ENCODE measurements at regions of chr7 and their contacts with region 1.

Region 1: DNA sequence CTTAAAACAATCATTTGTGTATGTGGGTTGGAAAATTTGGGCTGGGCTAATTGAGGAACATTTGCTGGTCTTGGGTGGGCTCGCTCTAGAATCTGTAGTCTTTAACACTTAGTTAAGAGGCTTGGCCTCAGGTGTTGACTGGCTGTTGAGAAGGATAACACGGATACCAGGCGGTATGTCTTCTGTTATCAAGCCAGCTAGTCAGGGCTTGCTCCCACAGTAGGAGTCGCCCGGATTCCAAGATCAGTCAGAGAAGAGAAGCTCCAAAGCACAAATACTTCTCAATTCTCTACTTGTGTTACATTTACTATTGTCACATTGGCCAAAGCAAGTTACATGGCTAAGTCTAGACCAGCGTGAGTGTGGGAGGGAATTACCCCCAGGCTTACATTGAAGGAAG is 62.7 kb upstream of the SP8 start:
- DNase-seq: no peak
- H3K4me3 ChIP-seq: no peak overlapping the region
- H3K27ac ChIP-seq: no peak overlapping the region
- H3K27me3 ChIP-seq: no peaks in the 10 kb centered on the region
- CTCF ChIP-seq: no peak

Region 2: DNA sequence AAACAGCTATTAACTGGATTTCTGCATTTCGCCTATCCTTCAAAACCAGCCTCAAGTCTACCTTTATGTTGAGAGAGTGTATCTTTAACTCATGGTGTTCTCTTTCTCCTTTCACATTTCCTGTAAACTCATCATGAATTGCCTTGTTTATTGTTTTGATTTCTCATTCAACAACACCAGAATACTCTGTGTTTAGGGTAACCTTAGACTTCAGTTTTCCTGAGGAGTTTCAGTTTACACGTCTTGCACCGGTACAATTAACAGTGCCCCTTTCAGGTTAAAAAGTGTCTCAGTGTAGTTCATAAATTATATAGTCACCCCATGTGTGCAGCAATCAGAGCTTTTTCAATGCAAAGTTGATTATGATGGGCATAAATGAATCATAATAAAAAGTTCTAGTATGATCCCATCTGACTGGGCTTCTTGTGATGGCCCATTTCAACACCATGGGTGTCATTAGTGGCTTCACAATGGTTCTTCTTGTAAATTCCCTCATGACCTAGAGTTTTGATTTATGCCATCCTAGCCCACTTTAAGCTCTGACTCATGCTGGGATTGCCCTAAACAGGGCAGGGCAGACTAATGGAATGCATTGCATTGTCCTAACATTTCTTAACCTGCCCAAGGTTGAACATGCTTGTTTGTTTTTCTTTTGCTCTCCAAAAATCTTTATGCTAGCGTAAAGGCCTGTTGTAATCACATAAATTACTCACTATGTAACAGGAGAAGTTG is 496.7 kb before region 1 on chr7:
- CTCF ChIA-PET with region 1: interaction called, 14 read pairs
- POLR2A ChIA-PET with region 1: no interaction called
- DNase-seq: no peak
- H3K4me3 ChIP-seq: no peak overlapping the region
- H3K27ac ChIP-seq: no peak overlapping the region
- H3K27me3 ChIP-seq: no peaks in the 10 kb centered on the region
- CTCF ChIP-seq: no peak

Region 3: GRCh38 chr7:20542594-20542993 is 306.8 kb before region 1 on chr7:
- CTCF ChIA-PET with region 1: no interaction called
- POLR2A ChIA-PET with region 1: no interaction called
- DNase-seq: no peak
- H3K4me3 ChIP-seq: no peak overlapping the region
- H3K27ac ChIP-seq: no peak overlapping the region
- H3K27me3 ChIP-seq: no peaks in the 10 kb centered on the region
- CTCF ChIP-seq: no peak